GM12878 (cell line): ENCODE measurements at regions of chr3 and their contacts with region 1.

Region 1: GRCh38 chr3:47291158-47291753 is 8.5 kb downstream of the KLHL18 start:
- DNase-seq: no peak
- ATAC-seq: peak; percentile 50
- H3K4me3 ChIP-seq: no peak overlapping the region
- H3K27ac ChIP-seq: peak overlapping the region; percentile 61
- H3K4me1 ChIP-seq: peaks cover 40% of the 10 kb centered on the region
- H3K27me3 ChIP-seq: no peaks in the 10 kb centered on the region
- CTCF ChIP-seq: no peak
- EP300 ChIP-seq: no peak
- POLR2A ChIP-seq: no peak
- RAD21 ChIP-seq: no peak

Region 2: GRCh38 chr3:47274652-47275051 is 16.6 kb before region 1 on chr3:
- CTCF ChIA-PET with region 1: interaction called, 6 read pairs
- POLR2A ChIA-PET with region 1: interaction called, 5 read pairs
- RAD21 ChIA-PET with region 1: interaction called, 3 read pairs
- SMC1A ChIA-PET with region 1: interaction called, 10 read pairs
- in situ Hi-C with region 1: no loop called
- intact Hi-C with region 1: no loop called
- DNase-seq: no peak
- ATAC-seq: no peak
- H3K4me3 ChIP-seq: no peak overlapping the region
- H3K27ac ChIP-seq: no peak overlapping the region
- H3K4me1 ChIP-seq: no peaks in the 10 kb centered on the region
- H3K27me3 ChIP-seq: no peaks in the 10 kb centered on the region
- CTCF ChIP-seq: 0 out of 6 replicates have a peak, but pooled peaks of 1 of the 3 experiments have one; percentile 7
- EP300 ChIP-seq: no peak
- POLR2A ChIP-seq: no peak
- RAD21 ChIP-seq: 0 out of 2 replicates have a peak, but pooled peaks have one; percentile 9

Region 3: DNA sequence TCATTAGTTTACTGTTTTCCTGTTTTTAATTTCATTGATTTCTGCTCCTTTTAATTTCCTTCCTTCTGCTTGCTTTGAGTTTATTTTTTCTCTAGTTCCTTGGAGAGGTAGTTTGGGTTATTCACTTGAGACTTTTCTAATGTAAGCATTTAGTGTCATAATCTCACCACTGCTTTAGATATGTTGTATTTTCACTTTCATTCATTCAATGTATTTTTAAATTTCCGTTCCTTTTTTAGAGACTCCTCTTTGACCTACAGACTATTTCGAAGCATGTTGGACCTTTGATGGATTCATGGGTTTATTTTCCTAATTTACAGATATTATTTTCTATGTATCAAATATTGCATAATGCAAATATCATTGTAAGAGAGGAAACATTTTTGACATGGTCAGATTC is 14.8 kb after region 1 on chr3:
- CTCF ChIA-PET with region 1: interaction called, 35 read pairs
- POLR2A ChIA-PET with region 1: interaction called, 38 read pairs
- RAD21 ChIA-PET with region 1: interaction called, 13 read pairs
- SMC1A ChIA-PET with region 1: interaction called, 68 read pairs
- in situ Hi-C with region 1: no loop called
- intact Hi-C with region 1: no loop called
- DNase-seq: no peak
- ATAC-seq: peak; percentile 69
- H3K4me3 ChIP-seq: peak overlapping the region; percentile 6; the same call in 1 of the 2 replicates
- H3K27ac ChIP-seq: peak overlapping the region; percentile 48; the same call in 1 of the 2 replicates
- H3K4me1 ChIP-seq: peaks cover 11% of the 10 kb centered on the region
- H3K27me3 ChIP-seq: no peaks in the 10 kb centered on the region
- CTCF ChIP-seq: no peak
- EP300 ChIP-seq: no peak
- POLR2A ChIP-seq: no peak
- RAD21 ChIP-seq: no peak

Region 4: GRCh38 chr3:47315069-47315647 is 23.9 kb after region 1 on chr3:
- CTCF ChIA-PET with region 1: interaction called, 25 read pairs
- POLR2A ChIA-PET with region 1: interaction called, 8 read pairs
- RAD21 ChIA-PET with region 1: interaction called, 12 read pairs
- SMC1A ChIA-PET with region 1: interaction called, 54 read pairs
- in situ Hi-C with region 1: no loop called
- intact Hi-C with region 1: no loop called
- DNase-seq: no peak
- ATAC-seq: no peak
- H3K4me3 ChIP-seq: no peak overlapping the region
- H3K27ac ChIP-seq: no peak overlapping the region
- H3K4me1 ChIP-seq: peaks cover 8% of the 10 kb centered on the region; the same call in 1 of the 2 replicates
- H3K27me3 ChIP-seq: no peaks in the 10 kb centered on the region
- CTCF ChIP-seq: no peak
- EP300 ChIP-seq: no peak
- POLR2A ChIP-seq: no peak
- RAD21 ChIP-seq: no peak

Region 5: DNA sequence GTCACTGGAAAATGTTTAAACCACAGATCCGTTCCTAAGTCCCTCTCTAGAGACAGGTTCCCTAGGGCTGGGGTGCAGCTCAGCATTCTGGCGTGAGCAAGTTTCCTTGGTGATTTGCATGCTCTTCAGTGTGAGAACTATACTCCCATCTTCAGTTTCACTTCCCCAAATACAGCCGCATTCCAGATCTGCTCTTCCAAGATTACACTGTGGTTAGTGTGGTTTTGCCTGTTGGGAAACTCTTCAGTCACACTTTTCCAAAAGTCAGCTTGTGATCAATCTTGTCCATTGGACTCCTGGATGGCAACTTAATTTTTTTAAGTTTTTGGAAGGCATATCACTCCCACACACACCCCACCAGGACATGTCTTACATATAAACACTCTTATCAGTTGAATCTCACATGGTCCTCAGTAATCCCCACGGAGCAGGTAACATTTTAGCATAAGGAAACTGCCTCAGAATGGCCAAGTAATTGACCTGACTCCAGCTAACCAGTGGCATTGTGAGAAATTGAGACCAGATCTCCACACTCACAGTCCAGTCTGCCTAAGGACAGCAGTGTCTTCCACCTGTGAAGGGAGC is 56.1 kb after region 1 on chr3:
- CTCF ChIA-PET with region 1: interaction called, 7 read pairs
- POLR2A ChIA-PET with region 1: interaction called, 16 read pairs
- RAD21 ChIA-PET with region 1: interaction called, 10 read pairs
- SMC1A ChIA-PET with region 1: interaction called, 5 read pairs
- in situ Hi-C with region 1: no loop called
- intact Hi-C with region 1: no loop called
- DNase-seq: peak; percentile 82
- ATAC-seq: peak; percentile 92
- H3K4me3 ChIP-seq: 0 out of 2 replicates have a peak overlapping the region, but pooled peaks have one; percentile 25
- H3K27ac ChIP-seq: peak overlapping the region; percentile 56
- H3K4me1 ChIP-seq: peaks cover 22% of the 10 kb centered on the region
- H3K27me3 ChIP-seq: no peaks in the 10 kb centered on the region
- CTCF ChIP-seq: no peak
- EP300 ChIP-seq: peak; percentile 76 to 91
- POLR2A ChIP-seq: no peak
- RAD21 ChIP-seq: no peak

Region 6: GRCh38 chr3:47455806-47456452 is 164.7 kb after region 1 on chr3:
- CTCF ChIA-PET with region 1: no interaction called
- POLR2A ChIA-PET with region 1: no interaction called
- RAD21 ChIA-PET with region 1: no interaction called
- SMC1A ChIA-PET with region 1: no interaction called
- in situ Hi-C with region 1: no loop called
- intact Hi-C with region 1: no loop called
- DNase-seq: no peak
- ATAC-seq: no peak
- H3K4me3 ChIP-seq: no peak overlapping the region
- H3K27ac ChIP-seq: no peak overlapping the region
- H3K4me1 ChIP-seq: no peaks in the 10 kb centered on the region
- H3K27me3 ChIP-seq: no peaks in the 10 kb centered on the region
- CTCF ChIP-seq: no peak
- EP300 ChIP-seq: no peak
- POLR2A ChIP-seq: no peak
- RAD21 ChIP-seq: no peak